GM23248 (cell line): ENCODE measurements at regions of chr1 and their contacts with region 1.

Region 1: DNA sequence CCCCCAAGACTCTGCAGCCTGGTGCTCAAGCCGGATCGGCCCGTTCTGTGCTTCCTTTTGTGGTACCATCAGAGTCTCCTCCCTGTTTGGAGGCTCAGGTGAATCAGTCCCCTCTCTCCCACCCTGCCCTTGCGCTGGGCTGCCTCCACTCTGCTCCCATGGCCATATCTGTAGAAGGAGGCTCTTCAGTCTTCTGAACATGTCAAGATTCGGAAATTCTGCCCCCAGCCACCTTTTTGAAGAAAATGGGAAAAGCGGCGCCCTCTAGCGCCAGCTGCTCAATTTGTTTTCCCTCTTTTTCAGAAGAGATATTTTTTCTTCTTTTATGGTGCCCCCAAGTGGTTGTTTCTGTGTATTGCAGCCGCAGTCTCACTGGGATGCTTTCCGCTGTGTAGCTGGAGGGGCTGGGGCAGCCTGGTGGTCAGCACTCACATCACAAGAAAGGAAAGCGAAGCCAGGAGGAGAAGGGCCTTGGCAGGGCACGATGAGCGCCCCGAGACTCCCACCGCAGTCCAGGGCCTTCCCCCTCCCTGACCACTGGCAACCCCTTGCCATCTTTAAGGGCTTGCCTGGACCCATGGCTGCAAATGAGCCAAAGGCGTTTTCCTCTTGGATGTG is 58.4 kb upstream of the CACNA1E start:
- DNase-seq: peak; percentile 67
- H3K4me3 ChIP-seq: no peak overlapping the region
- H3K27ac ChIP-seq: no peak overlapping the region
- H3K4me1 ChIP-seq: no peaks in the 10 kb centered on the region
- H3K27me3 ChIP-seq: no peaks in the 10 kb centered on the region; the same call in 1 of the 2 replicates

Region 2: GRCh38 chr1:181206513-181206912 is 218.4 kb before region 1 on chr1:
- in situ Hi-C with region 1: loop called (anchors 25 kb)
- DNase-seq: no peak
- H3K4me3 ChIP-seq: no peak overlapping the region
- H3K27ac ChIP-seq: no peak overlapping the region
- H3K4me1 ChIP-seq: no peaks in the 10 kb centered on the region
- H3K27me3 ChIP-seq: peaks cover 11% of the 10 kb centered on the region

Region 3: DNA sequence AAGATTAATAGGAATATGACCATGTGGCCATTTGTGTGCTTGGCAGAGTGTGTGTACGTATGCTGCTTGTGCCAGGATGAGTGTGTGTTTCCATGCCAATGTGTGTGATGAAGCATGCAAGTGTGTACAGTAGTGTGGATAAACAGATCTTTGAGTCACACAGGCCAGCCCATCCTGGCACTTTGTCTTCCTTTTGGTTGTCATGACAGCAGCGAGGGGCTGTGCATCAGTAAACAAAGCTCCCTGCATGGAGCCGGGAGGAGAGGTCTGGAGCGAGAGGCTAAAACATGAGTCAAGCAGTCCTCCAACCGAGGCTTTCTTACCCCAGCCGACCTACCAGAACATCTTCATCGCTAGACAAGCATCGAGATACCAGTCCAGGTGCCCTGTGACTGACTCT is 279.7 kb after region 1 on chr1:
- in situ Hi-C with region 1: no loop called
- DNase-seq: no peak
- H3K4me3 ChIP-seq: no peak overlapping the region
- H3K27ac ChIP-seq: no peak overlapping the region
- H3K4me1 ChIP-seq: no peaks in the 10 kb centered on the region
- H3K27me3 ChIP-seq: no peaks in the 10 kb centered on the region

Region 4: GRCh38 chr1:181898773-181899172 is 473.9 kb after region 1 on chr1:
- in situ Hi-C with region 1: no loop called
- DNase-seq: no peak
- H3K4me3 ChIP-seq: no peak overlapping the region
- H3K27ac ChIP-seq: no peak overlapping the region
- H3K4me1 ChIP-seq: no peaks in the 10 kb centered on the region
- H3K27me3 ChIP-seq: no peaks in the 10 kb centered on the region